ENCODE measurements at regions of chr5 and their contacts with region 1.

Region 1: GRCh38 chr5:74648835-74649293 is 8.3 kb upstream of the ENC1 start:
- DNase-seq: peak; percentile 49 to 68 (median 59)
- H3K4me3 ChIP-seq: no peak overlapping the region
- H3K4me3 Mint-ChIP-seq: no peak overlapping the region
- H3K27ac ChIP-seq: no peak overlapping the region
- H3K27ac Mint-ChIP-seq: no peak overlapping the region
- H3K4me1 ChIP-seq: peaks cover 10 to 13% of the 10 kb centered on the region in 2 donors
- H3K4me1 Mint-ChIP-seq: peaks cover 19% of the 10 kb centered on the region
- H3K27me3 ChIP-seq: no peaks in the 10 kb centered on the region
- H3K27me3 Mint-ChIP-seq: peaks cover 0 to 1% (median 0%) of the 10 kb centered on the region in 3 donors
- CTCF ChIP-seq: peak; percentile 80

Region 2: DNA sequence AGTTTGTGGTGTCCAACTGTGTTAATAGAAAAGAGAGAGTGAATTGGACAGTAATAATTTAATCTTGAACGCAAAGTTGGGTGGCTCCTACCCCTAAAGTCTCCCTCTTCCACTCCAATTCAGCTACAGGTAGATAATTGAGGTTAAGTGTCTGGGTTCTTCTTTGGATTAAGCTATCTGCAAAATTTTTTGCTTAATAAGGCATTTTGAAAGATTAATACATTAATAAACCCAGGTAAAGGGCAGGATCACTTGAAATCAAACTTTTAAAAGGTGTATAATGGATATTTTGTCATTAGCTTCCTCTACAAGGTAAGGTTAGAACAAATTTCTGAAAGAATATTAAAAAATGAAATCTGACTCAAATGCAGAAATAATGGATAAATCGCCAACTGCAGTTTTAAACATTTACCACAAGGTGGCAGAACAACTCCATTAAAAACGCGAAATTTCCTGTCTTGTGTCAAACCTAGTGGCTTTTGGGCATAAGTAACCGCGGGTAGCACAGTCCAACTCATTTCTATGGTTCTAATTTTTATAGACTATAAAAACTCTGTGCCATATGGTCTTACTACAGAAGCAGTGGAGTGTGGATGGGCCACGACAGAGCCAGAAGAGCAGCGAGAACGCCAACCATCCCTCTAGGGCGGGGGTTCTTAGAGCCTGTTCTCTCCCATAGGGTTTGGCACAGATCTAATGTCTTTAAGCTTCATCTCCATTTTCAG is 746.4 kb before region 1 on chr5:
- intact Hi-C with region 1: loop called (anchors 1 to 2 kb)
- DNase-seq: peak; percentile 36 to 65 (median 51)
- H3K4me3 ChIP-seq: no peak overlapping the region
- H3K4me3 Mint-ChIP-seq: no peak overlapping the region
- H3K27ac ChIP-seq: no peak overlapping the region
- H3K27ac Mint-ChIP-seq: no peak overlapping the region
- H3K4me1 ChIP-seq: peaks cover 13 to 22% of the 10 kb centered on the region in 2 donors
- H3K4me1 Mint-ChIP-seq: peaks cover 25% of the 10 kb centered on the region
- H3K27me3 ChIP-seq: no peaks in the 10 kb centered on the region
- H3K27me3 Mint-ChIP-seq: peaks cover 0 to 4% (median 0%) of the 10 kb centered on the region in 3 donors
- CTCF ChIP-seq: peak; percentile 83

Region 3: DNA sequence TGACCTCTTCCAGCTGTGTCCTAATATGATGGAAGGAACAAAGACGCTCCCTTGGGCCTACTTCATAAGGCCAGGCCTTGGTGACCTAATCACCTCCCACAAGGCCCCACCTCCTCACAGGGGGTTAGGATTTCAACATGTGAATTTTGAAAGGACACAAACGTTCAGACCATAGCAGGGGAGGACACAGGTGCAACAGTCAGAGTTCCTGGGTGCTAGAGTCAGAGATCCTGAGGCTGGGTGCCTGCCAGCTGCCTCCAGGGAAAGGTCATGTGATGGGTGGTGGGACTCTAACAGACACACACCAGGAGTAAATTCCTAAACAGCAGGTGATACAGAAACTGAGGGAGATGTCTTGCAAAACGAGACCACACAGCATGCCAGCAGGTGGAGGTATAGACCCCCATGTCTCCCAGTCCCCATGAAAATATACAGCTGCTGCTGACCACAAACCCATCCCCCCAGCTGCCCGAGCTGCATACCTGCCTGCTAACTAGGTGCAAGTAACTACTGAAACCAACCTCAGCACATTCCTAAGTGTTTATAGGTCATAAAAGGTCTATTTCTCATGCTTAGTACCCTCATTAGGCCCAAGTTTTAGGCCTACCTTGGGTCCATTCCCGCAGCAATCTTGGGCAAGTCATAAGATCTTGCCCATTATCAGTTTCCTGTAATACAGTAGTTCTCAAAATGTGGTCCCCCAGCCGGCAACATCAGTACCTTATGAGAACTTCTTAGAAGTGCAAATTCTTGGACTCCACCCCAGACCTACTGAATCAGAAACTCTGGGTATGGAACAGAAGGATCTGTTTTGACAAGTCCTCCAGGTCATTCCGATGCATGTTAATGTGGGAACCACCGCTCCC is 253.7 kb before region 1 on chr5:
- intact Hi-C with region 1: loop called in 1 of 2 experiments (anchors 10 kb)
- DNase-seq: no peak
- H3K4me3 ChIP-seq: no peak overlapping the region
- H3K4me3 Mint-ChIP-seq: no peak overlapping the region
- H3K27ac ChIP-seq: no peak overlapping the region
- H3K27ac Mint-ChIP-seq: peak overlapping the region in 1 of 7 donors; percentile 54
- H3K4me1 ChIP-seq: no peaks in the 10 kb centered on the region
- H3K4me1 Mint-ChIP-seq: peaks cover 14% of the 10 kb centered on the region
- H3K27me3 ChIP-seq: no peaks in the 10 kb centered on the region
- H3K27me3 Mint-ChIP-seq: no peaks in the 10 kb centered on the region
- CTCF ChIP-seq: peak; percentile 8

Measured in CD14-positive monocyte (primary cell).